ENCODE measurements at regions of chr16 and their contacts with region 1.

Region 1: GRCh38 chr16:66344533-66345145 is 21.9 kb upstream of the CDH5 start:
- DNase-seq: no peak
- ATAC-seq: peak; percentile 66
- H3K4me3 ChIP-seq: no peak overlapping the region
- H3K27ac ChIP-seq: no peak overlapping the region
- H3K4me1 ChIP-seq: no peaks in the 10 kb centered on the region
- H3K27me3 ChIP-seq: peaks cover 0 to 1% of the 10 kb centered on the region in 2 experiments; a peak in 1 of 4 replicates
- CTCF ChIP-seq: peak; percentile 50 to 73 (median 53); a peak in 5 of 6 replicates
- EP300 ChIP-seq: no peak
- POLR2A ChIP-seq: no peak
- RAD21 ChIP-seq: no peak

Region 2: DNA sequence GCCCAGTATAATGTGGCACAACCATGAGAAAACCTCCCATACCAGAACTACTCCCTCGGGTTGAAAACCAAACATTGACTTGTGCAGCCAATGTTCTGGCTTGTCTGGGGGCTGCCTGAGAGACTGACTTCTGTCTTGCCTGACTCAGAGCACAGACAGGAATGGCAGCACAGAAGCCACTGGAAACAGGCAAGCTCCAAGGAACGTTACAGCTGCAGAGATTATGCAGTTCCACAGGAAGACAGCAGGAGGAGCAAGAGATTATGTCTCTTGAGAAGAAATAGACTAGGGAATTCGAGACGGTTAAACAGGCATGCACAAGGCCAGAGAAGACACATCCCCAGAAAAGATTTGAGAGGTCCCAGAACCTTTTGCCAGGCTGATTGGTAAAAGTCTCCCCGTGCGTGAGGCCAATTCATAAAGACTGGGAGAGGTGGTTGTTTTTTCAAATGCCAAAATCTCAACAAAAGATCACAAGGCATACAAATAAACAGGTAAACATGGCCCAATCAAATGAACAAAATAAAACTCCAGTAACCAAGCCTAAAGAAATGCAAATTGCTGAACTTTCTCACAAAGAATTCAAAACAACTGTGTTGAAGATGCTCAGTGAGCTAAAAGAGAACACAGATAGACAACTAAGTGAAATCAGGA is 68.7 kb before region 1 on chr16:
- CTCF ChIA-PET with region 1: interaction called, 8 read pairs
- POLR2A ChIA-PET with region 1: no interaction called
- RAD21 ChIA-PET with region 1: interaction called, 4 read pairs
- SMC1A ChIA-PET with region 1: no interaction called
- in situ Hi-C with region 1: no loop called
- intact Hi-C with region 1: loop called (anchors 2 kb)
- DNase-seq: no peak
- ATAC-seq: peak; percentile 54
- H3K4me3 ChIP-seq: no peak overlapping the region
- H3K27ac ChIP-seq: no peak overlapping the region
- H3K4me1 ChIP-seq: no peaks in the 10 kb centered on the region
- H3K27me3 ChIP-seq: no peaks in the 10 kb centered on the region; a peak in 1 of 4 replicates
- CTCF ChIP-seq: peak; percentile 52 to 64 (median 63); a peak in 5 of 6 replicates
- EP300 ChIP-seq: no peak
- POLR2A ChIP-seq: no peak
- RAD21 ChIP-seq: peak; percentile 34; the same call in 1 of the 2 replicates

Region 3: DNA sequence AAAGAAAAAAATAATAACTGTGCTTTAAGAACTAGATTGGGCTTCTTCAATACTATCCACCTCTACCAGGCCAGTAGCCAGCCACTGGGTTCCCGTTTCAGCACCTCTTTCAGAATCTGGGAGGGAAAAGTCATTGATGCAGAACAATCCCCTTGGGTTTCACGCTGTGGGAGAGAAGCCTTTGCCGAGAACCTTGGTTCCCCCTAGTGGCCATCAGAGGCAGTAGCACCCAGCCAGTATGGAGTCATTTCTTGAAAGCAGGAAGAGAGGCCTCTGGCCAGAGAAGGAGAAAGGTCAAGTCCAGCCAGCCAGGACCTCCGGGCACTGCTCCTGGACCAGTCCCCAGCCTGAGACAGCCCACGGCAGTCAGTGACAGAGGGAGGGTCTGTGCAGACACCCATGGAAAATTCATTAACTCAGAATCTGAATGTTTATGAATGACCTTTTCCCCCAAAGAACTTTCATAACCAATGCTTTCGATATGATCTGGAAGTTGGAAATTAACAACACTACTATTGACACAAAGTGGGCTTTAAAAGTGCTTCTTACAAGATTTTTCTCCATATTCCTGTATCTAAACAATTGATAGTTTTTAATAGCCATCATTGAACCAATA is 29.3 kb before region 1 on chr16:
- CTCF ChIA-PET with region 1: interaction called, 26 read pairs
- POLR2A ChIA-PET with region 1: no interaction called
- RAD21 ChIA-PET with region 1: no interaction called
- SMC1A ChIA-PET with region 1: no interaction called
- in situ Hi-C with region 1: no loop called
- intact Hi-C with region 1: no loop called
- DNase-seq: peak; percentile 9
- ATAC-seq: peak; percentile 98
- H3K4me3 ChIP-seq: no peak overlapping the region
- H3K27ac ChIP-seq: no peak overlapping the region
- H3K4me1 ChIP-seq: no peaks in the 10 kb centered on the region
- H3K27me3 ChIP-seq: peaks cover 0 to 3% of the 10 kb centered on the region in 2 experiments; a peak in 1 of 4 replicates
- CTCF ChIP-seq: peak; percentile 93 to 99 (median 95)
- EP300 ChIP-seq: no peak
- POLR2A ChIP-seq: no peak
- RAD21 ChIP-seq: peak; percentile 79

Region 4: DNA sequence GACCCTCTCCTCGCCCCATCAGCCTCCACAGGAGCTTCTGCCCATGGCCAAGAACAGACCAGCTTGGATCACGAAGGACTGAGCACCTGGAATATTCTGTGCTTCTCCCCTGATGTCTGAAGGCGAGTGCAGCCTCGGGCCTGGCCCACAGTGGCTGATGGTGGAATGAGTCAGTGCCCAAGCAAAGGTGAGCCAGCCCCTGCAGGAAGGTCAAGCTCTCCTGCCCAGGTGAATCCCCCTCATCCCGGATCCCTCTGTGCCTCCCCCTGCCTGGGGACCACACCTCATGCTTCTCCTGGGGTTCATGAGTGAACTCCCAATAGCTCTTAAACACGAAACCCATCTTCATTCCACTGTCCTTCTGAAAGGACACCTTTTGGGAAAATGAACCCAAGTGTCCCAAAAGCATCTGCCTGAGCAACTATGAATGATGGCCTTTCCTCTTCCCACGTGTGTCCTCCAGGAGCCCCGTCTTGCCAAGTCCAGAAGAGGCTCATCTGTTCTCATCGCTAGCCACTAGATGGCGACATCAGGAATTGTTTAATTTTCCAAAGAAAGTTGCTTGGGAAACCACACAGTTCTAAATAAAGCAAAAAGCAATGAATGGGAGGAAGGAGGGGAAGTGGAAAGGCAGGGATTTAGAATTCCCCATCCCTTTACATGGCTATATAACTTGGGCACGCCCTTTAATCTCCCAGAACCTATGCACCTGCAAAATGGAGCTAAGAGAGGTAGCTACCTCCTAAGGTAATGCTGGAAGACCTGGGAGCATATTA is 12.7 kb after region 1 on chr16:
- CTCF ChIA-PET with region 1: interaction called, 33 read pairs
- POLR2A ChIA-PET with region 1: no interaction called
- RAD21 ChIA-PET with region 1: no interaction called
- SMC1A ChIA-PET with region 1: interaction called, 3 read pairs
- in situ Hi-C with region 1: no loop called
- intact Hi-C with region 1: no loop called
- DNase-seq: no peak
- ATAC-seq: peak; percentile 68
- H3K4me3 ChIP-seq: no peak overlapping the region
- H3K27ac ChIP-seq: no peak overlapping the region
- H3K4me1 ChIP-seq: no peaks in the 10 kb centered on the region
- H3K27me3 ChIP-seq: no peaks in the 10 kb centered on the region; a peak in 2 of 4 replicates
- CTCF ChIP-seq: peak; percentile 50 to 69 (median 56)
- EP300 ChIP-seq: no peak
- POLR2A ChIP-seq: no peak
- RAD21 ChIP-seq: peak; percentile 28; the same call in 1 of the 2 replicates